GM10248 (cell line): ENCODE measurements at regions of chr4 and their contacts with region 1.

Region 1: GRCh38 chr4:47715716-47716416 is 122.0 kb downstream of the CORIN start:
- DNase-seq: no peak
- CTCF ChIP-seq: no peak

Region 2: DNA sequence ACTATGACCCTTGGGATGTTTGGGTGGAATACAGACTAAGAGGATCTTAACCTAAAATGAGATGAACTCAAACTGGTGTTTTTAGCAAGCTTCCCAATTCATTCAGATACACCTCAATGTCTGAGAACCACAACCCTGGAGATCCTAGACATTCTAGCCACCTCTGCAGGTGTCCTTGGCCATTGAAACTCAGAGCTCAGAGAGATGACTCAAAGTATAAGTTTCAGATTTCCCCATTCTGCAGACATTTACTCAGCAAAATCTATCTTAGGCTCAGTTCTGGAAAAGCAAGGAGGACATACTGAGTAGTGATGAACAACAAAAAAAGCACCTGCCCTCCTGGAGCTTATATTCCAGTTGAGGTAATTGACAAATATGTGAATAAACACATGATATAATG is 300.1 kb before region 1 on chr4:
- CTCF ChIA-PET with region 1: no interaction called
- POLR2A ChIA-PET with region 1: no interaction called
- DNase-seq: no peak
- CTCF ChIP-seq: no peak

Region 3: DNA sequence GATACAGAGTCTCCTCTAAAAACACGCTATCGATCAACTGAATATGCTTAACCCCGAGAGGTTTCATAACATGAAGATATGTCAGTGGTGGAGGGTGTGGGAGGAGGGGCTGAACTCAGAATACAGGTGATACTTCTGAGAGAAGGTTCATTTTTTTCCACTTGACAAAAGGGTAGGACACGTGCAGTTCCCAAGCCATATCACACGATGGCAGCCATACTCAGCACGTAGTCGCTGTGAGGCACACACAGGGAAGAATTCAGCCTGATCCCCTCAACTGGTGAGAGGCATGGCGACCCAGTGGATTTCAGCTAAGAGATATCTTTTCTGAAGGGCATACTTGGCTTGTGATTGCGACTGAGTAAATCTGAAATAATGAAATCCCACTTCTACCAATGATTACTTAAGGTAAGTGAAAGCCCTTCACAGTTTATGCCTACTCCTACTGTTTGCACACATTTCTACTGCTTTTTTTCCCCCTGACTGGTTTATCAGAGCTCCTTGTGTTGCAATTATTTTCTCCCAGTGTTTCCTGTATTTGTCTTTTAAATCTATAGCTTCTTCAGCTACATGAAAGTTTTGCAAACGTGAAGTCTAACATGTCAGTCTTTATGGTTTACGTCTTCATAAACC is 11.1 kb before region 1 on chr4:
- CTCF ChIA-PET with region 1: interaction called, 15 read pairs
- POLR2A ChIA-PET with region 1: no interaction called
- DNase-seq: peak; percentile 15
- CTCF ChIP-seq: peak; percentile 41

Region 4: GRCh38 chr4:47801481-47802002 is 85.7 kb after region 1 on chr4:
- CTCF ChIA-PET with region 1: no interaction called
- POLR2A ChIA-PET with region 1: no interaction called
- DNase-seq: no peak
- CTCF ChIP-seq: no peak